Esophagus muscularis mucosa (tissue), 4 donors: ENCODE measurements at regions of chr1 and their contacts with region 1.

Region 1: DNA sequence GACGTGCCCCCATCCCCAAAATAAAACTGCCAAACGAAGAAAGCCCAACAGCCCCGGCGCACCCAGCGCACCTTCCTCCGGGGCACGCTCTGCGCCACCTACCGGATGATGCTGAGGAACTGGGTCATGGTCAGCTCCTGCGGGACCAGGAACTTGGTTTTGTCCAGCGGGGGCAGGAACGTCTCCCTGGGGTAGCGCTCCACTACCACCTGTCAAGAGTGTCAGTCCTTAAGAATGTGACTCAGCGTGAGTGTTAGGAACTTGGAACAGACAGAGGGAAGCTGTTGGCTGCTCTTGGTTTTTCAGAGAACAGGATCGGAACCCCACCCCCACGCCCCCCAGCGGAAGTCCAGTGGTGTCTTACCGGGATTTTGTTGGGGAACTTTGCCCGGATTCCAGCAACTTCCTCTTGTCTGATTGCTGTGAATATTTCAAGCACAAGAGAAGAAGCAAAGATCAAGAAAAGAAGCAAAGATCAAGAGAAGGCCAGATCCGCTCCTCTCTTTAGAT is 431 bp downstream of the MAP1LC3C start:
- DNase-seq: peak; percentile 94
- H3K4me3 ChIP-seq: peak overlapping the region; percentile 36 to 54 (median 38)
- H3K27ac ChIP-seq: peak overlapping the region; percentile 47 to 62 (median 52)
- H3K4me1 ChIP-seq: peaks cover 0 to 14% (median 12%) of the 10 kb centered on the region in 4 donors
- H3K27me3 ChIP-seq: no peaks in the 10 kb centered on the region
- CTCF ChIP-seq: peak; percentile 40 to 52 (median 51)
- EP300 ChIP-seq: no peak
- POLR2A ChIP-seq: no peak

Region 2: GRCh38 chr1:241611063-241611462 is 387.4 kb before region 1 on chr1:
- intact Hi-C with region 1: loop called (anchors 5 kb)
- DNase-seq: no peak
- H3K4me3 ChIP-seq: no peak overlapping the region
- H3K27ac ChIP-seq: no peak overlapping the region
- H3K4me1 ChIP-seq: peaks cover 0 to 4% (median 0%) of the 10 kb centered on the region in 4 donors
- H3K27me3 ChIP-seq: peaks cover 0 to 6% (median 0%) of the 10 kb centered on the region in 4 donors
- CTCF ChIP-seq: peak; percentile 66 to 71 (median 68)
- EP300 ChIP-seq: no peak
- POLR2A ChIP-seq: no peak